HEK293T (cell line): ENCODE measurements at regions of chr7 and their contacts with region 1.

Region 1: GRCh38 chr7:7267136-7267535 is 84.8 kb downstream of the C1GALT1 start:
- DNase-seq: no peak

Region 2: DNA sequence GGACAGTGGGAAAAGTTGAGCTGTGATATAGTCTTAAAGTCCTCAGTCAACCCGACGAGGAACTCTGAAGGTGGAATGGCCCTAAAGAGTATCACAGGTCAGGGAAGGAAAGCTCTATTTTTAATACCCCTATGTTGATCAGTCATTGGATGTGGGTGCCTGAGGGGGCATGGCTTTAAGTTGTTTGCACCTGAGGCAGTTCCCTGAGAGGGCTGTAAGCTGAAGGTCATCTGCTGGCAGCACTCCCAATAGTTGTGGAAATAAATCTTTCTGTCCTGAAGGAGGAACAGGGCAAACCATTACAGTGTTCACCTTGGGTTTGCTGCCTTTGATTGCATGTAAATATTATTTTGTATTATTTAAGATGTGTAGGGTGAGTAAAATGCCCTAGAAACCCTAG is 102.5 kb before region 1 on chr7:
- CTCF ChIA-PET with region 1: no interaction called
- POLR2A ChIA-PET with region 1: no interaction called
- DNase-seq: no peak

Region 3: DNA sequence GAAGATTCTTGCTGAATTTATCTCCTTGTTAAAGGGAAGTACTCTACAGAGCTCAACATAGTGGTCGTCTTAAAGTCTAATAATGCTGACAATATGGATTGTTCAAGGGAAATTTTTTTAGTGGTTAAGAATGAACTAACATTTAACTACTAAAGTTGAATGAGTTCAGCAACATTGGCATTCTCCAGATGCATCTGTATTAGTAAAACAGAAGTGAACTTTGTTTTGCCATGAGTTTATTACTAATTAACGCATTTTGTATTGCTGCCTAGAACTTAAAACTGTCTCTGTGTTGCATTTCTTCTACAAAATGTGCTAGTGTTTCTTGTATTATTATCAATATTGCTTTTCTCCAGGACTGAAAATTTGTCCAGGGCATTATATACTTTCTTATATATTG is 17.3 kb before region 1 on chr7:
- CTCF ChIA-PET with region 1: interaction called, 11 read pairs
- POLR2A ChIA-PET with region 1: no interaction called
- DNase-seq: no peak